A549 (cell line): ENCODE measurements at regions of chr13 and their contacts with region 1.

Region 1: DNA sequence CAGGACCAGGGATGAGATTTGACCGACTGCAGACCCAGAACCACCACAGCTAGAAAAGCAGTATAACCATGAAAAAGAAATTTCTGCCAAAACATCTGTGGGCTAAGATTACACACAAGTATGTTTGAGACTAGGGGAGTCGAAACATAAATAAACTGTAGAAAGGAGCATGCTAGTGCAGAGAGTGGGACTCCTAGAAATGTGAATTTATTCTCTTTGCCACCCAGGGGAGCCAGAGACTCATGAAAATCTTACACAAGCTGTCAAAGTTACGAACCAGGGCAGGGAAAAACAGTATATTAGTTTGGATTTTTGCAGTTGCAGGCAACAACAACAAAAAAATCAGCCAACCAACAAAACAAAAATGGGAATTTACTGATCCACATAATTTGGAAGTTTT is 12.3 kb upstream of the HSPH1 start:
- DNase-seq: no peak
- ATAC-seq: peak in 1 of 2 experiments; percentile 58; a peak in 2 of 6 replicates
- H3K4me3 ChIP-seq: no peak overlapping the region
- H3K27ac ChIP-seq: 0 out of 6 replicates have a peak overlapping the region, but pooled peaks of 1 of the 2 experiments have one; percentile 5
- H3K4me1 ChIP-seq: peaks cover 21% of the 10 kb centered on the region
- CTCF ChIP-seq: peak; percentile 27
- EP300 ChIP-seq: no peak
- POLR2A ChIP-seq: no peak
- RAD21 ChIP-seq: peak; percentile 45 to 47

Region 2: GRCh38 chr13:29969286-29969685 is 1204.7 kb before region 1 on chr13:
- CTCF ChIA-PET with region 1: no interaction called
- POLR2A ChIA-PET with region 1: no interaction called
- DNase-seq: no peak
- ATAC-seq: no peak
- H3K4me3 ChIP-seq: no peak overlapping the region
- H3K27ac ChIP-seq: no peak overlapping the region
- H3K4me1 ChIP-seq: no peaks in the 10 kb centered on the region
- CTCF ChIP-seq: no peak
- EP300 ChIP-seq: no peak
- POLR2A ChIP-seq: no peak
- RAD21 ChIP-seq: no peak

Region 3: GRCh38 chr13:30787738-30788525 is 386.1 kb before region 1 on chr13:
- CTCF ChIA-PET with region 1: no interaction called
- POLR2A ChIA-PET with region 1: no interaction called
- DNase-seq: no peak
- ATAC-seq: no peak
- H3K4me3 ChIP-seq: no peak overlapping the region
- H3K27ac ChIP-seq: no peak overlapping the region
- H3K4me1 ChIP-seq: peaks cover 10% of the 10 kb centered on the region
- CTCF ChIP-seq: no peak
- EP300 ChIP-seq: no peak
- POLR2A ChIP-seq: no peak
- RAD21 ChIP-seq: no peak

Region 4: DNA sequence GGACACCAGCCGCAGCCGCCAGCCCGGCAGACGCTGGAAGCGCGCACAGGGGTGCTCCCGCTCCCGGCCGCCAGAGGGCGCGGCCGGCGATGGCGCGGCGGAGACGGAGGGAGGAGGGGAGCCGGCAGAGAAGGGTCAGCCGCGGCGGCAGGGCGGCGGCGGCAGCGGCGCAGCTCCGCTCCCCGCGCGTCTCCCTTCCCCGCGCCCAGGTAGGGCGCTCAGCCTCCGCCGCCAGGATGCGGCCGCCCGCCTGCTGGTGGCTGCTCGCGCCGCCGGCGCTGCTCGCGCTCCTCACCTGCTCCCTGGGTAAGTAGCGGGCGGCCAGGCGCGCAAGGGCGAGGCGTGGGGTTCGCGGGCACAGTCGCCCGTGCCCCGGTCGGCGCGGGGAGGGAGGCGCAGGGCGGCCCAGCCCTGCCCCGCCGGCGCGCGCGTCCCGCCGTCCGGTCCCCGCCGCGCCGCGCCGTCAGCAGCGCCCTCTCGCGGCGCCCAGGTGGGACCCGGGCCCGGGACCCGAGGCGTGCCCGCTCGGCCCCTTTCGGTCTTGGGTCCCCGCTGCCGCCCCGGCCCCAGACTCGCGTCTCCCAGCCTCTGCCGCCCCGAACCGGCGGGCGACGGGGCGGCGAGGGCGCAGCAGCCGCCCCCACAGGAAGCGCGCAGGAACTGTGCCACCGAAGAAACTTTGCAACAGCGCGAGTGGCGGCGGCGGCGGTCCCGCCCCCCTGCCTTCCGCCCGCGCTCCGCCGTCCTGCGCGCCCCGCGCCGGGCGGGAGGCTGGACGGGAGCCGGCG is 26.0 kb after region 1 on chr13 and contains the start of gene B3GLCT:
- CTCF ChIA-PET with region 1: interaction called, 20 read pairs
- POLR2A ChIA-PET with region 1: interaction called, 3 read pairs
- DNase-seq: peak; percentile 64 to 74
- ATAC-seq: peak; percentile 91 to 94
- H3K4me3 ChIP-seq: peak within 1 kb of the TSS; percentile 71
- H3K27ac ChIP-seq: peak within 1 kb of the TSS; percentile 96 to 100
- H3K4me1 ChIP-seq: peaks cover 16% of the 10 kb centered on the region
- CTCF ChIP-seq: peak; percentile 61
- EP300 ChIP-seq: no peak
- POLR2A ChIP-seq: peak; percentile 60; the same call in 1 of the 2 replicates
- RAD21 ChIP-seq: peak in 1 of 2 experiments; percentile 28; a peak in 2 of 5 replicates
- polyA plus RNA-seq, gene B3GLCT: 4.5 and 5.5 TPM in 2 replicates

Region 5: GRCh38 chr13:31236211-31236786 is 62.3 kb after region 1 on chr13:
- CTCF ChIA-PET with region 1: interaction called, 12 read pairs
- POLR2A ChIA-PET with region 1: no interaction called
- DNase-seq: peak in 1 of 2 experiments; percentile 26
- ATAC-seq: peak in 1 of 2 experiments; percentile 66; a peak in 3 of 6 replicates
- H3K4me3 ChIP-seq: no peak overlapping the region
- H3K27ac ChIP-seq: no peak overlapping the region
- H3K4me1 ChIP-seq: no peaks in the 10 kb centered on the region
- CTCF ChIP-seq: peak; percentile 62
- EP300 ChIP-seq: no peak
- POLR2A ChIP-seq: no peak
- RAD21 ChIP-seq: peak; percentile 64

Region 6: GRCh38 chr13:31424117-31424729 is 250.2 kb after region 1 on chr13:
- CTCF ChIA-PET with region 1: interaction called, 12 read pairs
- POLR2A ChIA-PET with region 1: no interaction called
- DNase-seq: peak; percentile 60 to 75
- ATAC-seq: peak; percentile 99 to 100
- H3K4me3 ChIP-seq: no peak overlapping the region
- H3K27ac ChIP-seq: no peak overlapping the region
- H3K4me1 ChIP-seq: no peaks in the 10 kb centered on the region
- CTCF ChIP-seq: peak; percentile 64
- EP300 ChIP-seq: no peak
- POLR2A ChIP-seq: no peak
- RAD21 ChIP-seq: peak; percentile 73 to 84

Region 7: DNA sequence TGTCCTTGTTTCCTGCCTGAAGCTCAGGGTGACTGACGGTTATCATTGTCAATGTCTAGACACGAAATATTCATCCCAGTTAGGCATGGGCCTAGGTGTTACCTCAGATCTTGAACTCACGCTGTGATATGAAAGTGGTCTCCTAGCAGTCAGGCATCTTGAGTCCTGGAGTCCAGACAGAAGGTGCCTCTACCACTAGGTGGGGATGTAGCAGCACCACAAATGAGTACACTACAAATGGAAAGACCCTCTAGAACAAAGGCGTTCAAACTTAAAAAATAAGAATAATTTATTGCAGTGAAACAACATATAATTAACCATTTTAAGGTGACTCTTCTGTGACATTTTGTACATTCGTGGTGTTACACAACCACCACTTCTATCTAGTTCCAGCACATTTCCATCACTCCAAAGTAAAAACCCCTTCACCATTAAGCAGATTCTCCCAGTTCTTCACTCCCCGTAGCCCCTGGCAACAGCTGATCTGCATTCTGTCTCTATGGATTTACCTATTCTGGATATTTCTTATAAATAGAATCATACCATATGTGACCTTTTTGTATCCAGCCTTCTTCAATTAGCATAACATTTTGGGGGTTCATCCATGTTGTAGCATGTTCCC is 845.7 kb after region 1 on chr13:
- CTCF ChIA-PET with region 1: no interaction called
- POLR2A ChIA-PET with region 1: no interaction called
- DNase-seq: peak; percentile 25 to 50
- ATAC-seq: peak; percentile 64 to 78; a peak in 5 of 6 replicates
- H3K4me3 ChIP-seq: no peak overlapping the region
- H3K27ac ChIP-seq: no peak overlapping the region
- H3K4me1 ChIP-seq: no peaks in the 10 kb centered on the region
- CTCF ChIP-seq: peak; percentile 48
- EP300 ChIP-seq: no peak
- POLR2A ChIP-seq: no peak
- RAD21 ChIP-seq: peak; percentile 44 to 48; a peak in 4 of 5 replicates